ENCODE measurements at regions of chr9 and their contacts with region 1.

Region 1: DNA sequence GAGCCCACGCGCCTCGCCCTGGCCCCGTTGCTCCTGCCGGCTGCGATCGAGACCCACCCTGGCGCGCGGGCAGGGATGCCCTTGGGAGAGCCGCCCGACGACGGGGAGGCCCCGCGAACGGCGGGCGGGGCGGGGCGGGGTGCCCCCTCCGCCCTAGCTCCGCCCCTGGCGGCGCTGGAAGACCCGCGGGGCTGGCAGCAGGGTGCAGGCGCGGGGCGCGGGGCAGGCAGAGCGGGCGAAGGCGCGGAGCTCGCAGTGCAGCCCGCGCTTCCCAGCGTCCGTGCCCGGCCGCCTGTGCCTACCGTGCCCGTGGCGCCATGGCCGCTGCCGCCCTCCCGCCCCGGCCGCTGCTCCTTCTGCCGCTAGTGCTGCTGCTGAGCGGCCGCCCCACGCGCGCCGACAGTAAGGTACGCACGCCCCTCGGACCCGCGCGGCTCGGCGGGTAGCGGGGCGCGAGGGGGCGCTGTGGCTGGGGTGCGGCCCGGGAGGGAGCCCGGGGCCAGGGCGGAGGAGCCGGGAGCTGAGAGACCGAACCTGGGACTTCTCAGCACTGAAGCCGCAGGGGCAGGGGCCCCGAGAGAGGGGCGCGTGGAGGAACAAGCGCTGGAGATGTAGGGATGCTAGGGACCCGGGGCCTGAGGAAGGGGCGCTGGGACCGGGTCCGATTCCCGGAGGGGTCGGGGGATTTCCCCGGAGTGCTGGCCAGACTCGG is at the start of gene OLFML2A:
- DNase-seq: peak; percentile 75
- total RNA-seq, gene OLFML2A: 7.8 to 9.1 TPM

Region 2: GRCh38 chr9:124839612-124840299 is 62.6 kb after region 1 on chr9:
- intact Hi-C with region 1: loop called in 1 of 2 experiments (anchors 5 kb)
- DNase-seq: no peak

Measured in posterior vena cava (tissue), 2 donors.